ENCODE measurements at regions of chr1 and their contacts with region 1.

Region 1: DNA sequence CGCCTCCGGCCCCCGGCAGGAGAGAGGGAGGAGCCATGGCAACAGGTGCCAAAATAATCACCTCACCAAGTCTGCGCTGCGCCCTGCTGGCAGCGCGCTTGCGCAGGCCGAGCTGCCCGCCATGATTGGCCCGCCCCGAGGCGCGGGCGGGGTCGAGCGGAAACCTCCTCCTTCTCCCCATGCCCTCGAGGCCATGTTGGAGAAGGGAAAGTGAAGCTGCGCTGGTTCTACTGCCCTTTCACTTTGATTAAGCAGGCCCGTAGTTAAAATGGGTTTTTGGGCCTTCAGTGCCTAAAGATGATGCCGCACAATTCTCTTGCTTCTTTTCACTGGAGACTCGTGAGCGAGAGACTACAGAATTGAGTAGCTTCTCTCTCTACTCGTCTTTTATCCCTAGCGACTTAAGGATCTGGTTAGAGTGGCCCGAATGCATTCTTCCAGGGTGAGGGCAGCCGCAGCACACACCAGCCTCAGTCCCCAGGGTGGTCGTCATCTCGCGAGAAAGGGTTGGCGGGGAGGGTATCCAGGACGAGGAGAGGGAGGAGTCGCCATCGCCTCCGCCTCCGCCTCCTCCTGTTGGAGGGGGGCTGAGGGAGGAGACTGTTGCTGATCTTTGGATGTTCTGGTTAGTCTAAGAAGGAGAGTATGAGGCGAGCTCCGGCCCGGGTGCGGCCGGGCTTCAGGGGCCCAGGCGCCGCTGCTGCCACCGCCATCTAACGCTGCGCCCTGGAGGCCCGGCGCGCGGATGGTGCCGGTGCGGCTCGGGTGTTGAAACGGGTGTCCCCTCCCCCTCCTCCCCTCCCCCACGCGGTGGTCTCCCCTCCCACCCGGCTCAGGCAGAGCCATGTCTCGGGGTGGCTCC is at the start of gene DCAF6:
- DNase-seq: peak; percentile 98 to 99 (median 99)
- H3K4me3 ChIP-seq: peak within 1 kb of the TSS; percentile 69 to 90
- H3K4me3 Mint-ChIP-seq: peak within 1 kb of the TSS; percentile 90 to 99 (median 94)
- H3K27ac ChIP-seq: peak within 1 kb of the TSS; percentile 85
- H3K27ac Mint-ChIP-seq: peak within 1 kb of the TSS; percentile 97 to 100 (median 98)
- H3K4me1 ChIP-seq: peaks cover 28% of the 10 kb centered on the region
- H3K4me1 Mint-ChIP-seq: peaks cover 29 to 58% (median 43%) of the 10 kb centered on the region in 4 donors
- H3K27me3 ChIP-seq: no peaks in the 10 kb centered on the region
- H3K27me3 Mint-ChIP-seq: no peaks in the 10 kb centered on the region
- total RNA-seq, gene DCAF6: 28.3 to 29.2 TPM

Region 2: GRCh38 chr1:167553136-167554027 is 382.9 kb before region 1 on chr1 and contains the start of gene CREG1:
- CTCF ChIA-PET with region 1: no interaction called
- POLR2A ChIA-PET with region 1: interaction called, 4 read pairs
- intact Hi-C with region 1: loop called (anchors 5 kb)
- DNase-seq: peak; percentile 85 to 93 (median 87)
- H3K4me3 ChIP-seq: peak within 1 kb of the TSS; percentile 74 to 77
- H3K4me3 Mint-ChIP-seq: peak within 1 kb of the TSS; percentile 87 to 94 (median 90)
- H3K27ac ChIP-seq: peak within 1 kb of the TSS; percentile 41
- H3K27ac Mint-ChIP-seq: peak within 1 kb of the TSS; percentile 36 to 89 (median 84)
- H3K4me1 ChIP-seq: peaks cover 30% of the 10 kb centered on the region
- H3K4me1 Mint-ChIP-seq: peaks cover 23 to 56% (median 39%) of the 10 kb centered on the region in 4 donors
- H3K27me3 ChIP-seq: no peaks in the 10 kb centered on the region
- H3K27me3 Mint-ChIP-seq: peaks cover 0 to 3% of the 10 kb centered on the region in 2 donors
- total RNA-seq, gene CREG1: 21.0 to 21.7 TPM

Region 3: DNA sequence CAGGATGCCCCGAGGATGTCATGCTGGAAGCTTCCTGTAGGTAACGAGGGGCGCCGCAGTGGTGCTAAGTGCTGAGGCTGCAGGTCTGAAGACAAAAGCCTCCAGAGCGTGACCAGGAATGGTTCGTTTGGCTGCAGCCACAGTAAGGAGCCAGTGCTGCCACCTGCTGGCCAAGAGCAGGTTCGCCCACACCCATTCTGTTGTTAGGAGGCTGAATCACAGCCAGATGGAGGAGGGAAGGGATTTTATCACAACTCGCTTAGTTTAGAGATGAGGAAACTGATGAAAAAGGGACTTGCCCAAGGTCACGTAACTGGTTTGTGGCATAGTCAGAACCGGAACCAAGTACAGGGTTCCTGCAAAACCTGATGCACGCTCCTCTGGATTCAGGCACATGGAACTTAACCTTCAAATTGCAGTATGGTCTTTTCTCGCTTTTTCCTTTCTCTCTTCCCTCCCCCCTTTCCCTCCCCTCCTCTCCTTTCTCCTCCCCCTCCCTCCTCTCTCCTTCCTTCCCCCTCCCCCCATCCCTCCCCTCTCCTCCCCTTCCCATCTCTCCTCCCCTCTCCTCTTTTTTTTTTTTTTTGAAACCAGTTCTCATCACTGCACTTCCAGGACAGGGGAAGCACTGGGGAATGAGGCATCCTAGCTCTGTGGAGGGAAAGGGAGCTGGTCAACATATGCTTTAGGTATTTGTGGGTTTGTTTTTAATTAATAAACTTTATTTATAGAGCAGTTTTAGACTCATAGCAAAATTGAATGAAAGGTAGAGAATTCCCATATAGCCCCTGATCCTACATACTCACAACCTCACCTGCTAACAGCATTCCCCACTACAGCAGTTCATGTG is 132.7 kb before region 1 on chr1:
- CTCF ChIA-PET with region 1: interaction called, 5 read pairs
- POLR2A ChIA-PET with region 1: interaction called, 6 read pairs
- intact Hi-C with region 1: loop called (anchors 2 kb)
- DNase-seq: peak; percentile 70 to 81 (median 73)
- H3K4me3 ChIP-seq: no peak overlapping the region
- H3K4me3 Mint-ChIP-seq: peak overlapping the region in 7 of 8 donors; percentile 35 to 70 (median 57)
- H3K27ac ChIP-seq: no peak overlapping the region
- H3K27ac Mint-ChIP-seq: peak overlapping the region in 5 of 7 donors; percentile 6 to 87 (median 62)
- H3K4me1 ChIP-seq: peaks cover 26% of the 10 kb centered on the region
- H3K4me1 Mint-ChIP-seq: peaks cover 23 to 34% (median 26%) of the 10 kb centered on the region in 4 donors
- H3K27me3 ChIP-seq: no peaks in the 10 kb centered on the region
- H3K27me3 Mint-ChIP-seq: peaks cover 2% of the 10 kb centered on the region in 2 donors

Region 4: GRCh38 chr1:168225476-168226190 is 289.3 kb after region 1 on chr1 and contains the start of gene SFT2D2:
- CTCF ChIA-PET with region 1: no interaction called
- POLR2A ChIA-PET with region 1: interaction called, 10 read pairs
- intact Hi-C with region 1: no loop called
- DNase-seq: peak; percentile 78 to 85 (median 81)
- H3K4me3 ChIP-seq: peak within 1 kb of the TSS; percentile 70 to 84
- H3K4me3 Mint-ChIP-seq: peak within 1 kb of the TSS; percentile 95 to 98 (median 96)
- H3K27ac ChIP-seq: peak within 1 kb of the TSS; percentile 80
- H3K27ac Mint-ChIP-seq: peak within 1 kb of the TSS; percentile 87 to 98 (median 96)
- H3K4me1 ChIP-seq: peaks cover 31% of the 10 kb centered on the region
- H3K4me1 Mint-ChIP-seq: peaks cover 25 to 48% (median 38%) of the 10 kb centered on the region in 4 donors
- H3K27me3 ChIP-seq: no peaks in the 10 kb centered on the region
- H3K27me3 Mint-ChIP-seq: peaks cover 2% of the 10 kb centered on the region in 2 donors
- total RNA-seq, gene SFT2D2: 61.7 to 63.2 TPM

Region 5: DNA sequence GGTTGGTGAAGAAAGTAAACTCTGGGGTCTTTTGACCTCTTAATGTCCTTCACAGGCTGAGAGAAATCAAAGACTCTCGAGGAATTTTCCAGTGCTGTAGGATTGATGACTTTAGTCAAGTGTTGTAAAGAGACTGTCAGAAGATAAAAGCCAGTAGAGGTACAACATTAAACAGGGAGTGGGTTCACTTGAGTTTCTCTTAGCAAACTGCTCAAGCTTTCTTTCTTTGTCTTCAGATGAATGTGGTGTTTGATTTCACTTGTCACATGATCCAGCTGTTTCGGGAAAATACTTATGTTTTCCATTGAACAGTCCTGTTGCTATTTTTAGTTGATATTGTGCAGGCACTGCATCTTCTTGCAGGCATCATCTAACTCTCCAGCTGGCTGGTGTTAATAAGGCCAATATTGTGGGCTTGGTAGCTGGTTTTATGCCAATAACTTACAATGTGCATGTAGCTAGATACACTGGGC is 561.9 kb after region 1 on chr1:
- CTCF ChIA-PET with region 1: no interaction called
- POLR2A ChIA-PET with region 1: no interaction called
- intact Hi-C with region 1: no loop called
- DNase-seq: no peak
- H3K4me3 ChIP-seq: no peak overlapping the region
- H3K4me3 Mint-ChIP-seq: no peak overlapping the region
- H3K27ac ChIP-seq: no peak overlapping the region
- H3K27ac Mint-ChIP-seq: no peak overlapping the region
- H3K4me1 ChIP-seq: no peaks in the 10 kb centered on the region
- H3K4me1 Mint-ChIP-seq: peaks cover 4 to 11% (median 8%) of the 10 kb centered on the region in 4 donors
- H3K27me3 ChIP-seq: no peaks in the 10 kb centered on the region
- H3K27me3 Mint-ChIP-seq: no peaks in the 10 kb centered on the region

Region 6: GRCh38 chr1:169485544-169486278 is 1549.4 kb after region 1 on chr1 and contains the start of gene SLC19A2:
- CTCF ChIA-PET with region 1: no interaction called
- POLR2A ChIA-PET with region 1: no interaction called
- intact Hi-C with region 1: loop called (anchors 1 kb)
- DNase-seq: peak; percentile 89 to 96 (median 91)
- H3K4me3 ChIP-seq: peak within 1 kb of the TSS; percentile 60 to 63
- H3K4me3 Mint-ChIP-seq: peak within 1 kb of the TSS; percentile 93 to 97 (median 95)
- H3K27ac ChIP-seq: peak within 1 kb of the TSS; percentile 73
- H3K27ac Mint-ChIP-seq: peak within 1 kb of the TSS; percentile 88 to 96 (median 94)
- H3K4me1 ChIP-seq: peaks cover 20% of the 10 kb centered on the region
- H3K4me1 Mint-ChIP-seq: peaks cover 28 to 37% (median 30%) of the 10 kb centered on the region in 4 donors
- H3K27me3 ChIP-seq: no peaks in the 10 kb centered on the region
- H3K27me3 Mint-ChIP-seq: no peaks in the 10 kb centered on the region
- total RNA-seq, gene SLC19A2: 4.1 to 4.5 TPM